B cell (primary cell): ENCODE measurements at regions of chr6 and their contacts with region 1.

Region 1: GRCh38 chr6:2196079-2196679 is 49.2 kb downstream of the GMDS start:
- DNase-seq: peak; percentile 67
- ATAC-seq: peak; percentile 73
- H3K4me3 ChIP-seq: no peak overlapping the region
- H3K4me3 Mint-ChIP-seq: no peak overlapping the region
- H3K27ac ChIP-seq: no peak overlapping the region
- H3K27ac Mint-ChIP-seq: no peak overlapping the region
- H3K4me1 ChIP-seq: peaks cover 10 to 11% of the 10 kb centered on the region in 2 donors
- H3K4me1 Mint-ChIP-seq: peaks cover 2% of the 10 kb centered on the region
- H3K27me3 ChIP-seq: no peaks in the 10 kb centered on the region
- H3K27me3 Mint-ChIP-seq: no peaks in the 10 kb centered on the region
- CTCF ChIP-seq: peak; percentile 97

Region 2: DNA sequence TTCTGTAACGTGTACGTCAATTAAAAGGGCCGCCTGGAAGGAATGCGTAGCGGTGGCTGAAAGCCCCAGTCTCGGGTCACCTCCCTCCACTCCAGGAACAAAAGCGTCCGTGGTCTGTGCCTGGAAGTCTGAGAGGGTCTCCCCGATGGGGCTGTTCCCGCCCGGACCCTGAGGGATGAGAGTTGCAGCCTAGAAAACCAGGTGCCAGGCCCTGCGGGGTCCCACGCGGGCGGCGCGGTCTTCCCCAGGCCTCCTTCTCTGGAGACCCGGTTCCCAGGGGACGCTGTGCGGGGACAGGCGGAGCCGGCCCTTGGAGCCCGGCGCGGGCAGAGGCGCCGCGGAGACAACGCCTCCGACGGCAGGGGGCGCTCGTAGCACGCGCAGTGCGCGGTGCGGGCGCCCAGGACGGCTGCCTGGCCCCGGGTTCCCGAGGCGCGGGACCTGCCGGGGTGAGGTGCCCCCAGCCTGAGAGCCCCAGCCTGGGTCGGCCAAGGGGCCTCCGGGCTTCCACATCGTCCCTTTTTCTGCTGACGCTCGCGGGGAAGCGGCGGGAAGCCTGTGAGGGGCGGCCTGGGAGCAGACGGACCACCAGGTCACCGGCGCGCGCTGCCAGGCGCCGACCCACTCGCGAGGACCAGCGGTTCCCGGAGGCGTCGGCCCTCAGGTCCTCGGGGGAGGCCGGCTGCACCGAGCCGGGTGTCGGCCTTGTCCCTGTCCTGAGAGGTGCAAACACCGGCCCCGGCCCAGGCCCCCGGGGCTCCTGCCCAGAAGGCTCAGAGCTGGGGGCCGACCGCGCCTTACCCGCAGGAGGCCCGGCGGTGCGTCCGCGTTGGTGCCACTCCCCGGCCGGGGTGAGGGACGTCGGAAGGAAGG is 591.8 kb before region 1 on chr6:
- CTCF ChIA-PET with region 1: interaction called, 13 read pairs
- POLR2A ChIA-PET with region 1: no interaction called
- intact Hi-C with region 1: loop called (anchors 1 kb)
- DNase-seq: peak; percentile 84
- ATAC-seq: peak; percentile 81
- H3K4me3 ChIP-seq: peak overlapping the region in 4 of 5 experiments; percentile 10 to 59 (median 42)
- H3K4me3 Mint-ChIP-seq: peak overlapping the region; percentile 34
- H3K27ac ChIP-seq: no peak overlapping the region
- H3K27ac Mint-ChIP-seq: no peak overlapping the region
- H3K4me1 ChIP-seq: peaks cover 50 to 52% of the 10 kb centered on the region in 2 donors
- H3K4me1 Mint-ChIP-seq: peaks cover 34% of the 10 kb centered on the region
- H3K27me3 ChIP-seq: peaks cover 0 to 83% (median 66%) of the 10 kb centered on the region in 4 experiments
- H3K27me3 Mint-ChIP-seq: peaks cover 73% of the 10 kb centered on the region
- CTCF ChIP-seq: peak; percentile 99

Region 3: DNA sequence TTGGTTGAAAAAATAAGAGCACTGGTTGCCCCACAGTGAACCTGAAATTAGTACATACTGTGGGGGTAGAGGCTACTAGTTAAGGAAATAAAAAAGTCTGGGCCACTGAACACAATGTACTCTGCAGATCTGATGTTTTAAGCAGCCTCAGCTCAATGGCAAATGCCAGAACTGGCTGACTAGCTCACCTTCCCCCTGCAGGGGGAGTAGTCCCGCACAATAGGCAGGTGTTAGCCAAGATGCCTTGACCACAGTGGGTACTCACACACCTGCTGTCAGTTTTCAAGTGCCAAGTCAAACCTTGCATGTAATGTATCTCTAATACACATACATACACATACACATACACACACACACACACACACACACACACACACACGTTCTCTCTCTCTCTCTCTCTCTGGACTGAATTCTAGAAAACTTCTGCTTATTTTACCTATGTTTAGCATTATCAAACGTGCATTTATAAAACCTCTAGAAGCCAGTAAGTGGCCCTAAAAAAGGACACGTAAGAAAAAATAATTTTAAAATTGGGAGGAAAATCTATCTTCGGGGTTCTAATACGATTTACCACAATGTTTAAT is 13.1 kb after region 1 on chr6:
- CTCF ChIA-PET with region 1: interaction called, 10 read pairs
- POLR2A ChIA-PET with region 1: no interaction called
- intact Hi-C with region 1: no loop called
- DNase-seq: peak; percentile 55
- ATAC-seq: peak; percentile 53
- H3K4me3 ChIP-seq: no peak overlapping the region
- H3K4me3 Mint-ChIP-seq: no peak overlapping the region
- H3K27ac ChIP-seq: no peak overlapping the region
- H3K27ac Mint-ChIP-seq: no peak overlapping the region
- H3K4me1 ChIP-seq: no peaks in the 10 kb centered on the region
- H3K4me1 Mint-ChIP-seq: no peaks in the 10 kb centered on the region
- H3K27me3 ChIP-seq: no peaks in the 10 kb centered on the region
- H3K27me3 Mint-ChIP-seq: no peaks in the 10 kb centered on the region
- CTCF ChIP-seq: peak; percentile 42

Region 4: GRCh38 chr6:2327591-2327990 is 131.4 kb after region 1 on chr6:
- CTCF ChIA-PET with region 1: no interaction called
- POLR2A ChIA-PET with region 1: no interaction called
- intact Hi-C with region 1: no loop called
- DNase-seq: no peak
- ATAC-seq: no peak
- H3K4me3 ChIP-seq: no peak overlapping the region
- H3K4me3 Mint-ChIP-seq: no peak overlapping the region
- H3K27ac ChIP-seq: no peak overlapping the region
- H3K27ac Mint-ChIP-seq: no peak overlapping the region
- H3K4me1 ChIP-seq: no peaks in the 10 kb centered on the region
- H3K4me1 Mint-ChIP-seq: no peaks in the 10 kb centered on the region
- H3K27me3 ChIP-seq: no peaks in the 10 kb centered on the region
- H3K27me3 Mint-ChIP-seq: no peaks in the 10 kb centered on the region
- CTCF ChIP-seq: no peak

Region 5: DNA sequence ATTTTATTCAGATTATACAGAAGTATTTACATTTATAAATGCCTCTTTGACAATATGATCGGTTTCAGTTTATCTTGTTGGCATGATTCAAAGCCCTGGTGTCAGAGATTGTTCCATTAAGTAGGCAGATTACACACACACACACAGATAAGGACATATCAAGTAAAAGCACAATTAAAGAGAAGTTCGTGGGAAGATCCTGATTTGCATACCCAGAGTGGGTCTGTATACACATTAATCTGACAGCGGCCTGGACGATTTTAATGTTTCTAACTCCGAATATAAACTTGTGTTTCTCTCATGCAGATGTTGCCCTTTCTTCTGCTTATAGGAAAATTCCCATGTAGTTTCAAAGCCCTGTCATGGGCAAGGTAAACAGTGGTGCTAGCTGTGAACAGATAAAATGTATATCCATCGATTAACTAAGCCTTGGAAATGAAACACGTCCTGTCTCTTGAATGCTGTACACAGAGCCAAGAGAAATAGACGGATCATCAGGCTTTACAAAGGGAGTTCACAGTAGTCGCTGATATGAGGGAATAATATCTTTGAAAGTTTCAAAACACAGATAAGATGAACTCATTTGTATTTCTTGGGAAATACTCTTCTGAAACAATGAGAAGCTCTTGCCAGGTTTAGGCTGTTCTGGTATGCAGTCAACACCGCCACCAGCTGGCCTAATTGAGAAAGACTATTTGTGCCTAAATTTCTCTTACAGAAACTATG is 157.4 kb after region 1 on chr6:
- CTCF ChIA-PET with region 1: interaction called, 6 read pairs
- POLR2A ChIA-PET with region 1: no interaction called
- intact Hi-C with region 1: loop called (anchors 1 kb)
- DNase-seq: peak; percentile 63
- ATAC-seq: no peak
- H3K4me3 ChIP-seq: no peak overlapping the region
- H3K4me3 Mint-ChIP-seq: no peak overlapping the region
- H3K27ac ChIP-seq: no peak overlapping the region
- H3K27ac Mint-ChIP-seq: no peak overlapping the region
- H3K4me1 ChIP-seq: no peaks in the 10 kb centered on the region
- H3K4me1 Mint-ChIP-seq: no peaks in the 10 kb centered on the region
- H3K27me3 ChIP-seq: no peaks in the 10 kb centered on the region
- H3K27me3 Mint-ChIP-seq: no peaks in the 10 kb centered on the region
- CTCF ChIP-seq: peak; percentile 87

Region 6: GRCh38 chr6:2448820-2449571 is 252.8 kb after region 1 on chr6:
- CTCF ChIA-PET with region 1: no interaction called
- POLR2A ChIA-PET with region 1: no interaction called
- intact Hi-C with region 1: loop called (anchors 10 kb)
- DNase-seq: peak; percentile 38
- ATAC-seq: no peak
- H3K4me3 ChIP-seq: peak overlapping the region in 3 of 5 experiments; percentile 4 to 44 (median 33)
- H3K4me3 Mint-ChIP-seq: peak overlapping the region; percentile 62
- H3K27ac ChIP-seq: no peak overlapping the region
- H3K27ac Mint-ChIP-seq: no peak overlapping the region
- H3K4me1 ChIP-seq: no peaks in the 10 kb centered on the region
- H3K4me1 Mint-ChIP-seq: peaks cover 5% of the 10 kb centered on the region
- H3K27me3 ChIP-seq: no peaks in the 10 kb centered on the region
- H3K27me3 Mint-ChIP-seq: peaks cover 15% of the 10 kb centered on the region
- CTCF ChIP-seq: peak; percentile 67

Region 7: DNA sequence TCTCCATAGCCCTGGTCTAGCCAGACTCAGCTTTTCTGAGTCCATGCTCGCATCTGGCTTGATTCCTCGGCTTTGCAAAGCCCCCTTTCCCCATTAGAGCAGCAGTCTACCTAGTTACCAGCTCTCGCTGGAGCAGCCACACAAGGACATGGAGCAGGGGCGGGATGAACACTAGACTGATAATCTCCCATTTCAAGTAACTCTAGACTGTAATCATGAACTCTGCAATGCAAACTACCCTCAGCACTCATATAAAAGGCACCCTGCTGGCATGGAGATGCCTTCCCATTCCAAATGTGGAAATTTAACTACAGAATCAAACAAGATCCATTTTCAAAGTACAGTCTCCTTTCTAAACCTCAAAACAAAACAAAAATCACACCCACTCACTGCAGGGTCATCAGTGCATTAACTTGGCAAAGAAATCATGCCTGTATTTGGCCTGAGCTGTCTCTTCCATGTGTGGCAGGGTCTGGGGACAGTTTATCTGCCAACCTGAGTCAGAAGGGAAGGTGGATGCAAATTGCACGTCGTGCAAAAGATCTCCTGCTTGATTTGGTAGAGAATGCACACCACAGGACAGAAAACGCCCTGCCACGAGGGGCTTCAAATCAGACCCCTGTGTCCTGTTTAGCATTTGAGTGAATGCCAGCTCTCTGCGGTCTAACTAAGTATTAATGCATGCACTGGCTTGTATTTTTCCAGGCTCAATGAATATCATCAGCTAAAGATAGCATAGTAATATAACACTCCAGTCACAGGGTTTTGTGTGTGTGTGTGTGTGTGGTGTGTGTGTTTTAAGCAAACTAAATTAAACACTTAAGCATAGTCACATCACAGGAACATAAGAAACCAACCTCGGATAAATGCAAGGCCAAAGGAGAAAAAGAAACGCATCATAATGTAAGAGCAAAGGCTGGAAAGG is 469.2 kb after region 1 on chr6:
- CTCF ChIA-PET with region 1: no interaction called
- POLR2A ChIA-PET with region 1: no interaction called
- intact Hi-C with region 1: no loop called
- DNase-seq: no peak
- ATAC-seq: no peak
- H3K4me3 ChIP-seq: no peak overlapping the region
- H3K4me3 Mint-ChIP-seq: no peak overlapping the region
- H3K27ac ChIP-seq: no peak overlapping the region
- H3K27ac Mint-ChIP-seq: no peak overlapping the region
- H3K4me1 ChIP-seq: no peaks in the 10 kb centered on the region
- H3K4me1 Mint-ChIP-seq: peaks cover 8% of the 10 kb centered on the region
- H3K27me3 ChIP-seq: no peaks in the 10 kb centered on the region
- H3K27me3 Mint-ChIP-seq: peaks cover 3% of the 10 kb centered on the region
- CTCF ChIP-seq: no peak

Region 8: DNA sequence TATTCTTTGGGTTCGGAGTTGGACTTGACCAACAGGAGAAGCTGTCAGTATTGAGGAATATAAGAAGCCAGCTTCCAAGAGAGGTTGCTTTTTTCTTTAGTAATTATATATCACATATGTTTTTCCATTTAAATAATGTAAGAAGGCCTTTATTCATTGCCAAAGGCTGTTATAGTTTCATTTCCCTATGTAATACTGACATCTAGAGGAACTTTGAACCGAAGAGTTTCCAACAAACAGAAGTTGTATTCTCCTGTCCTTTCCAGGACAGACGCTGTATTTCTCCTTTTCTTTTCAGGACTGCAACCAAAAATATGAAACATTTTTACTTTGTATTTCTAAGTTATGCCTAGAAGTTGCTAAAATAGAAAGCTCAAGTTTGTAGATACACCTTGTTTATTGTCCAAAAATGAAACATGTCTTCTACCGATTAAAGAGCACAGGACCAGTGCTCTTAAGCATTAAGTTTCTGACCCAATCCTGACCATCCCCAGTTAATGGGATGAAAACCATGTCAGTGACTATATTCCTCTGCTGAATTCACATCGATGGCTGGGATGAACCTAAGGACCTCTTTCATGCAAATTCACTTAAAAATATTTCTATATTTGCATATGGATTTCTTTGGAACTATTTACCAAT is 499.4 kb after region 1 on chr6:
- CTCF ChIA-PET with region 1: no interaction called
- POLR2A ChIA-PET with region 1: no interaction called
- intact Hi-C with region 1: loop called (anchors 5 kb)
- DNase-seq: peak; percentile 42
- ATAC-seq: no peak
- H3K4me3 ChIP-seq: no peak overlapping the region
- H3K4me3 Mint-ChIP-seq: no peak overlapping the region
- H3K27ac ChIP-seq: no peak overlapping the region
- H3K27ac Mint-ChIP-seq: no peak overlapping the region
- H3K4me1 ChIP-seq: no peaks in the 10 kb centered on the region
- H3K4me1 Mint-ChIP-seq: no peaks in the 10 kb centered on the region
- H3K27me3 ChIP-seq: no peaks in the 10 kb centered on the region
- H3K27me3 Mint-ChIP-seq: peaks cover 7% of the 10 kb centered on the region
- CTCF ChIP-seq: peak; percentile 66